ENCODE measurements at regions of chr15 and their contacts with region 1.

Region 1: GRCh38 chr15:82183121-82184033 is 79.2 kb downstream of the EFL1 start:
- DNase-seq: no peak
- H3K4me3 ChIP-seq: no peak overlapping the region
- H3K27ac ChIP-seq: no peak overlapping the region
- H3K4me1 ChIP-seq: no peaks in the 10 kb centered on the region
- H3K27me3 ChIP-seq: no peaks in the 10 kb centered on the region
- CTCF ChIP-seq: no peak
- POLR2A ChIP-seq: no peak

Region 2: GRCh38 chr15:82146990-82147461 is 36.4 kb before region 1 on chr15:
- CTCF ChIA-PET with region 1: no interaction called
- POLR2A ChIA-PET with region 1: no interaction called
- dilution Hi-C with region 1: no loop called
- intact Hi-C with region 1: loop called (anchors 5 kb)
- DNase-seq: peak; percentile 93
- H3K4me3 ChIP-seq: no peak overlapping the region
- H3K27ac ChIP-seq: peak overlapping the region; percentile 83
- H3K4me1 ChIP-seq: peaks cover 15% of the 10 kb centered on the region
- H3K27me3 ChIP-seq: no peaks in the 10 kb centered on the region
- CTCF ChIP-seq: no peak
- POLR2A ChIP-seq: no peak